Activated CD8-positive, alpha-beta memory T cell treated with anti-CD3 and anti-CD28 coated beads, Interleukin-2, amount 10 ng/mL, durations not matched to agents 7 days and 5 days (primary cell): ENCODE measurements at regions of chr4 and their contacts with region 1.

Region 1: GRCh38 chr4:38804654-38805295 is at the start of gene TLR1:
- DNase-seq: no peak
- ATAC-seq: peak; percentile 81
- H3K4me3 Mint-ChIP-seq: peak within 1 kb of the TSS; percentile 74
- H3K27ac Mint-ChIP-seq: peak within 1 kb of the TSS; percentile 88
- H3K4me1 Mint-ChIP-seq: peaks cover 23% of the 10 kb centered on the region
- H3K27me3 Mint-ChIP-seq: no peaks in the 10 kb centered on the region
- total RNA-seq, gene TLR1: 3.2 to 5.3 TPM

Region 2: GRCh38 chr4:38743866-38744265 is 60.9 kb before region 1 on chr4:
- CTCF ChIA-PET with region 1: no interaction called
- DNase-seq: no peak
- ATAC-seq: no peak
- H3K4me3 Mint-ChIP-seq: no peak overlapping the region
- H3K27ac Mint-ChIP-seq: no peak overlapping the region
- H3K4me1 Mint-ChIP-seq: peaks cover 3% of the 10 kb centered on the region
- H3K27me3 Mint-ChIP-seq: peaks cover 15% of the 10 kb centered on the region

Region 3: DNA sequence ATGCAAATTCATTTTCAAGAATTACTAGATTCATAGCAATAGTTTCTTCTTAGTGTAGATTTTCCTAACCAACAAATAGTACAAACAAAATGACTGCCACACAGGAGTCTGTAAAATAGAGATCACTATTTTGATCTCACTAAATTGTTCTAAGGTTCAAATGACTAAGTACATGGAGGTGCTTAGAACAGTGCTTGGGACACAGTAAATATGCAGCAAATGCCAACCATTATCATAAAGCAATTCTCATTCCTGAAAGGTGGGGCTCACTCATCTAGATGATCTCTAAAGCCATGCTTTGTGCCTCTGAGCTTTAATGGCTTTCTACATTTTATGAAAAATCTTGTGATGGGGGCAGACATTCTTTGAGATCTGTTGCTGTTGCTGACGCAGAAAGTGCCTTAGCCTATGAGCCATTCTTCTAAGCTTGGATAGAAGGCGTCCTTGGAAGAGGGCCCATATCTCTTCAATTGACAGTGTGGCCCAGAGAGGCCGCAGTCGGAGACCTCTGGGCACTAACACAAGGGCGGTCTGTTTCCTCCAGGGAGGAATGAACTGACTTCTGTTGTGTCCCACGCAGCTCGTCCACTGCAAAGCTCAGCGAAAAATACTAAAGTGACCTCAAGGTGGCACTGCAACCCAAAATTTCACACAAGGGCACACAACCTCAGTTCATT is 45.5 kb before region 1 on chr4:
- CTCF ChIA-PET with region 1: interaction called, 39 read pairs
- DNase-seq: peak; percentile 71
- ATAC-seq: peak; percentile 69
- H3K4me3 Mint-ChIP-seq: no peak overlapping the region
- H3K27ac Mint-ChIP-seq: no peak overlapping the region
- H3K4me1 Mint-ChIP-seq: peaks cover 5% of the 10 kb centered on the region
- H3K27me3 Mint-ChIP-seq: peaks cover 11% of the 10 kb centered on the region

Region 4: GRCh38 chr4:38884254-38884653 is 79.5 kb after region 1 on chr4:
- CTCF ChIA-PET with region 1: no interaction called
- DNase-seq: no peak
- ATAC-seq: no peak
- H3K4me3 Mint-ChIP-seq: no peak overlapping the region
- H3K27ac Mint-ChIP-seq: no peak overlapping the region
- H3K4me1 Mint-ChIP-seq: peaks cover 9% of the 10 kb centered on the region
- H3K27me3 Mint-ChIP-seq: no peaks in the 10 kb centered on the region